ENCODE measurements at regions of chr3 and their contacts with region 1.

Region 1: GRCh38 chr3:66615643-66616301 is 115.0 kb upstream of the LRIG1 start:
- DNase-seq: no peak

Region 2: DNA sequence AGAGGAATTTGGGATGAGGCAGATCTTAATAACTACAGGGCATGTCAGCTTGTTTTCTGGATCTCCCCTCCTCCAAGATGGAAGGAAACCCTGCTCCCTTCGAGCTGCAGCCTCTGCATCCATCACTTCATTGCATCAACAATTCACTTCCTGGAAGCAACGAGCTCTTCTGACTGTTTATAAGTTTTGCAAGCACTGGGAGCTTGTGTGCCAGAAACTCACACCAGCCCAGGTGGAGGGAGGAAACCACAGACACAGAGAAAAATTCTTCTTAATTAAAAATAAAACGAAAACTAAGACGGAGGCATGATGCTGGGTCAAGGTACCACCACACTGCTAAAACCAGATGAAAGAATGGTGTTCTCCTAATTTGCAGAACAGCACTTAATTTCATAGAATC is 125.6 kb before region 1 on chr3:
- intact Hi-C with region 1: loop called in 1 of 2 experiments (anchors 5 kb)
- DNase-seq: no peak

Region 3: GRCh38 chr3:66598168-66598567 is 17.6 kb before region 1 on chr3:
- intact Hi-C with region 1: no loop called
- DNase-seq: no peak